Naive thymus-derived CD4-positive, alpha-beta T cell (primary cell): ENCODE measurements at regions of chr16 and their contacts with region 1.

Region 1: GRCh38 chr16:23149349-23149996 is at the start of gene USP31:
- DNase-seq: peak; percentile 77 to 89 (median 85)
- ATAC-seq: peak; percentile 97
- H3K4me3 ChIP-seq: peak within 1 kb of the TSS; percentile 93
- H3K4me3 Mint-ChIP-seq: peak within 1 kb of the TSS; percentile 92 to 98 (median 96)
- H3K27ac ChIP-seq: peak within 1 kb of the TSS; percentile 53
- H3K27ac Mint-ChIP-seq: peak within 1 kb of the TSS; percentile 37 to 92 (median 81)
- H3K4me1 ChIP-seq: peaks cover 0 to 6% of the 10 kb centered on the region in 2 donors
- H3K4me1 Mint-ChIP-seq: peaks cover 12 to 25% (median 22%) of the 10 kb centered on the region in 7 donors
- H3K27me3 ChIP-seq: no peaks in the 10 kb centered on the region
- H3K27me3 Mint-ChIP-seq: peaks cover 0 to 12% (median 5%) of the 10 kb centered on the region in 5 donors
- total RNA-seq, gene USP31: 2.7 to 6.0 (median 4.1) TPM

Region 2: GRCh38 chr16:22813223-22813945 is 336.1 kb before region 1 on chr16:
- CTCF ChIA-PET with region 1: no interaction called
- POLR2A ChIA-PET with region 1: no interaction called
- intact Hi-C with region 1: no loop called
- DNase-seq: no peak
- ATAC-seq: no peak
- H3K4me3 ChIP-seq: no peak overlapping the region
- H3K4me3 Mint-ChIP-seq: peak overlapping the region in 2 of 10 donors; percentile 21 to 57
- H3K27ac ChIP-seq: no peak overlapping the region
- H3K27ac Mint-ChIP-seq: no peak overlapping the region
- H3K4me1 ChIP-seq: no peaks in the 10 kb centered on the region
- H3K4me1 Mint-ChIP-seq: peaks cover 0 to 4% (median 0%) of the 10 kb centered on the region in 7 donors
- H3K27me3 ChIP-seq: peaks cover 0 to 4% of the 10 kb centered on the region in 2 donors
- H3K27me3 Mint-ChIP-seq: peaks cover 36 to 58% (median 49%) of the 10 kb centered on the region in 5 donors

Region 3: DNA sequence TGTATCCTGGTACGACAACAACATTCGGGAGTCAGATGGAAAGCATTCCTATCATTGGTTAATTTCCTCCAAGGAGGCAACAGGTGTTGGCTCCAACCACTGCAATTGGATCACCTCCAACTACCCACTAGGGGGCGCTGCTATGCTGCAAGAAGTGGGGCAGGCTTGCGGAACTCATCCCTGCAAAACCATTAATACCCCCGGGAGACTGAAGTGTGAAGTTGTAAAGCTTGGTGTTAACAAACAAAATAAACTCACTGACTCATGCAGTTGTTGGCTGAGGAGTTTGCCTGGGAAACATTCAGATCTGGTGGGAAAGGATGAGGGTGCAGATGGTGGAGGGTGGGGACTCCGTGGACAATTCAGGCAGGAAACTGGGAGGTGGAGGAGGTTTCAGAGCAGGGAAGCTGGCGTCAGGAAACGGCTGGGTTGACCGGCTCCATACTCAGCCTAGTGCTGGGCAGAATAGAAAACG is 250.6 kb before region 1 on chr16:
- CTCF ChIA-PET with region 1: no interaction called
- POLR2A ChIA-PET with region 1: no interaction called
- intact Hi-C with region 1: no loop called
- DNase-seq: peak in 4 of 9 donors; percentile 2 to 65 (median 16)
- ATAC-seq: no peak
- H3K4me3 ChIP-seq: no peak overlapping the region
- H3K4me3 Mint-ChIP-seq: no peak overlapping the region
- H3K27ac ChIP-seq: no peak overlapping the region
- H3K27ac Mint-ChIP-seq: no peak overlapping the region
- H3K4me1 ChIP-seq: no peaks in the 10 kb centered on the region
- H3K4me1 Mint-ChIP-seq: no peaks in the 10 kb centered on the region
- H3K27me3 ChIP-seq: no peaks in the 10 kb centered on the region
- H3K27me3 Mint-ChIP-seq: peaks cover 7 to 44% (median 28%) of the 10 kb centered on the region in 5 donors

Region 4: GRCh38 chr16:23072084-23072599 is 77.3 kb before region 1 on chr16:
- CTCF ChIA-PET with region 1: no interaction called
- POLR2A ChIA-PET with region 1: no interaction called
- intact Hi-C with region 1: no loop called
- DNase-seq: no peak
- ATAC-seq: no peak
- H3K4me3 ChIP-seq: no peak overlapping the region
- H3K4me3 Mint-ChIP-seq: no peak overlapping the region
- H3K27ac ChIP-seq: no peak overlapping the region
- H3K27ac Mint-ChIP-seq: no peak overlapping the region
- H3K4me1 ChIP-seq: no peaks in the 10 kb centered on the region
- H3K4me1 Mint-ChIP-seq: no peaks in the 10 kb centered on the region
- H3K27me3 ChIP-seq: no peaks in the 10 kb centered on the region
- H3K27me3 Mint-ChIP-seq: no peaks in the 10 kb centered on the region

Region 5: GRCh38 chr16:23101012-23101550 is 48.4 kb before region 1 on chr16:
- CTCF ChIA-PET with region 1: no interaction called
- POLR2A ChIA-PET with region 1: no interaction called
- intact Hi-C with region 1: loop called in 1 of 2 experiments (anchors 2 kb)
- DNase-seq: no peak
- ATAC-seq: no peak
- H3K4me3 ChIP-seq: no peak overlapping the region
- H3K4me3 Mint-ChIP-seq: no peak overlapping the region
- H3K27ac ChIP-seq: no peak overlapping the region
- H3K27ac Mint-ChIP-seq: no peak overlapping the region
- H3K4me1 ChIP-seq: no peaks in the 10 kb centered on the region
- H3K4me1 Mint-ChIP-seq: peaks cover 6 to 13% (median 12%) of the 10 kb centered on the region in 7 donors
- H3K27me3 ChIP-seq: no peaks in the 10 kb centered on the region
- H3K27me3 Mint-ChIP-seq: no peaks in the 10 kb centered on the region

Region 6: GRCh38 chr16:23182460-23183309 is 33.2 kb after region 1 on chr16 and contains the start of gene SCNN1G:
- CTCF ChIA-PET with region 1: no interaction called
- POLR2A ChIA-PET with region 1: no interaction called
- intact Hi-C with region 1: loop called in 1 of 2 experiments (anchors 1 kb)
- DNase-seq: peak; percentile 45 to 78 (median 63)
- ATAC-seq: peak; percentile 98
- H3K4me3 ChIP-seq: no peak within 1 kb of the TSS
- H3K4me3 Mint-ChIP-seq: peak within 1 kb of the TSS; percentile 46 to 84 (median 68)
- H3K27ac ChIP-seq: no peak within 1 kb of the TSS
- H3K27ac Mint-ChIP-seq: peak within 1 kb of the TSS in 1 of 9 donors; percentile 51
- H3K4me1 ChIP-seq: peaks cover 0 to 5% of the 10 kb centered on the region in 2 donors
- H3K4me1 Mint-ChIP-seq: peaks cover 8 to 15% (median 10%) of the 10 kb centered on the region in 7 donors
- H3K27me3 ChIP-seq: peaks cover 0 to 19% of the 10 kb centered on the region in 2 donors
- H3K27me3 Mint-ChIP-seq: peaks cover 47 to 78% (median 72%) of the 10 kb centered on the region in 5 donors
- total RNA-seq, gene SCNN1G: not detected